AG04450 (cell line): ENCODE measurements at regions of chr19 and their contacts with region 1.

Region 1: GRCh38 chr19:40392872-40393845 is 3.2 kb upstream of the HIPK4 start:
- DNase-seq: no peak
- H3K4me3 ChIP-seq: no peak overlapping the region
- H3K27ac ChIP-seq: no peak overlapping the region
- H3K27me3 ChIP-seq: no peaks in the 10 kb centered on the region
- CTCF ChIP-seq: no peak; the same call in 1 of the 2 replicates

Region 2: DNA sequence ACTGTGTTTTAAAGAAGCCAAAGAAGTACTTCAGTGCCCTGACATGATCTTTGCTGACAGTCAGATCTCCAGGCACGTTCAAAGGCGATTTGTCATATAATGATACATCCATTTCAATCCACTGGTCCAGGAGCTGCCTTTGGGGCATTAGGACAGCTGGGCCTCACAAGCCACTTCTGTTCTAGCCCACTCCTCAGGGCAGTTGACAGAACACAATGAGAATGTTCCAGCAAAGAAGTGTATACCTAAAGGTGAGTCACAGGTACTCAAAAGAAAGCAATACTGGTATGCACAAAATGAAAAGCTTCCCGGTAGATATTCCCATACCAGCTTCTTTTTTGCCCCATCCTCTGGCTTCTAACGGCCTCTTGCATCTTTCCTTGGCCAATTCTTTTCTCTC is 214.4 kb before region 1 on chr19:
- CTCF ChIA-PET with region 1: no interaction called
- POLR2A ChIA-PET with region 1: interaction called, 10 read pairs
- DNase-seq: no peak
- H3K4me3 ChIP-seq: no peak overlapping the region
- H3K27ac ChIP-seq: no peak overlapping the region
- H3K27me3 ChIP-seq: peaks cover 2% of the 10 kb centered on the region
- CTCF ChIP-seq: no peak

Region 3: GRCh38 chr19:40381321-40381720 is 11.8 kb before region 1 on chr19:
- CTCF ChIA-PET with region 1: no interaction called
- POLR2A ChIA-PET with region 1: interaction called, 11 read pairs
- DNase-seq: no peak
- H3K4me3 ChIP-seq: no peak overlapping the region
- H3K27ac ChIP-seq: no peak overlapping the region
- H3K27me3 ChIP-seq: no peaks in the 10 kb centered on the region
- CTCF ChIP-seq: peak; percentile 24; the same call in 1 of the 2 replicates